HEK293 (cell line): ENCODE measurements at regions of chr1 and their contacts with region 1.

Region 1: GRCh38 chr1:248825909-248826760 is at the start of gene SH3BP5L:
- H3K4me3 ChIP-seq: peak within 1 kb of the TSS; percentile 65
- H3K27ac ChIP-seq: peak within 1 kb of the TSS; percentile 61
- H3K4me1 ChIP-seq: no peaks in the 10 kb centered on the region
- CTCF ChIP-seq: no peak

Region 2: GRCh38 chr1:248807067-248807737 is 18.9 kb before region 1 on chr1:
- CTCF ChIA-PET with region 1: no interaction called
- POLR2A ChIA-PET with region 1: no interaction called
- H3K4me3 ChIP-seq: no peak overlapping the region
- H3K27ac ChIP-seq: no peak overlapping the region
- H3K4me1 ChIP-seq: no peaks in the 10 kb centered on the region
- CTCF ChIP-seq: no peak

Region 3: DNA sequence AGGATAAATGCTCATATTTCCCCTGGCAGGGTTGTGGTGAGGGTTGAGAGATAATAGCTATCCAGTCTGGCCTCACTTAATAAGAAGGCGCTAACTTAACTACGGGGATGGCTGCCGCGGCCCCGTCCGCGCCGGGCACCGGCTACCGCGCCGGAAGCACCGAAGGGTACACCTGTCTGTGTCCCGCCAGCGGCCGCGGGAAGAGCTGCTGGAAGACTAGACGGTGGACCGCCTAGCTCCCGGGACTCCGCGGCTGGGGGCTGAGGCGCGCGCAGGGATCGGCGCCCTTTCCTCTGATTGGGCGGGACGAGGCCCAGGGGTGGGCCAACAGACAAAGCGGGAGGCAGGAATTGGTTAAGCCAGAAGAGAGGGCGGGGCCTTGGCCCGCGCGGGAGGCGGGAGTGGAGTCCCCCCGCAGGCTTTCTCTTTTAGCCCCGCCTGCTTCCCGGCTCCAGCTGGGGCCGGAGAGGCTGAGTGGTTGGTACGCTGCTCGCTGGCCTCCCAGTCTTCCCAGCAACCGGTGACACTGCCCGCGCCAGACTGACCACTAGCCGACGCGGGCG is 11.7 kb after region 1 on chr1 and contains the start of gene ZNF672:
- CTCF ChIA-PET with region 1: interaction called, 3 read pairs
- POLR2A ChIA-PET with region 1: interaction called, 19 read pairs
- H3K4me3 ChIP-seq: peak within 1 kb of the TSS; percentile 59
- H3K27ac ChIP-seq: peak within 1 kb of the TSS; percentile 73
- H3K4me1 ChIP-seq: no peaks in the 10 kb centered on the region
- CTCF ChIP-seq: no peak

Region 4: DNA sequence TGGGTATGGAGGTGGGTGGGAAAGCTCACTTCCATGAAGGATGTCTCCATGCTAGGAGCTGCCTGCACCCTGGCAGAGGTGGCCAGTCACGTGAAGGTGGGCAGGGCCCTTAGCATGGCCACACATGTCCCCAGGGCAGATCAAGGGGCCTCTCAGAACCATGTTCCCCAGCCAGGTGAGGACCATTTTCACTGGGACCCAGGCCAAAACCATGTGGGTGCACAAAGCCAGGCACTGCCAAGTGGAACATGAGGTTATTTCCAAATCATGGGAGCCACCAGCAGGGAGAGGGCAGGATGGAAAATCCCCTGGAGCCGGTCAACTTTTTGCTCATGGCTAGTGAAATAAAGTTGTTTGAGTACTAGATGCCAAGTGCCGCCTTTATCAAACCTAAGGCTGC is 23.0 kb after region 1 on chr1:
- CTCF ChIA-PET with region 1: no interaction called
- POLR2A ChIA-PET with region 1: no interaction called
- H3K4me3 ChIP-seq: no peak overlapping the region
- H3K27ac ChIP-seq: no peak overlapping the region
- H3K4me1 ChIP-seq: no peaks in the 10 kb centered on the region
- CTCF ChIP-seq: no peak